Posterior vena cava (tissue), 2 donors: ENCODE measurements at regions of chr17 and their contacts with region 1.

Region 1: DNA sequence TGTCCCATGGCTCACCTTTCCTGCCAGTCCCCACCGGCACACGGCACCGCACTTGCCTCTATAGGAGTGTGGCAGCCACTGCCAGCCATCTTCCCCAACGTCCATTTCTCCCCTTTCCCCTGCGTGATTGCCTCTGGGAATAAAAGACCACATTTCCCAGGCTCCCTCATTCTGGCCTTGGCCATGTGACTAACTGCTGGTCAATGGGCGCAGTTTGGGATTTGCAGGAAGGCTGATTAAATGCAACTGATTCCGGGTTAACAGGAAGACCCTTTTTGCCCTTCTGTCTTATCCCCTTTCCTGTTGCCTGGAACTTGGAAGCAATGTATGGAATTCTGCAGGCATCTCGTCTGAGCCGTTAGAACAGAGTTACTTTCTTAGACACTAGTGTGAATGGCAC is 3.0 kb downstream of the BTBD17 start:
- DNase-seq: no peak

Region 2: GRCh38 chr17:72510397-72511016 is 1848.2 kb before region 1 on chr17:
- intact Hi-C with region 1: no loop called
- DNase-seq: no peak

Region 3: DNA sequence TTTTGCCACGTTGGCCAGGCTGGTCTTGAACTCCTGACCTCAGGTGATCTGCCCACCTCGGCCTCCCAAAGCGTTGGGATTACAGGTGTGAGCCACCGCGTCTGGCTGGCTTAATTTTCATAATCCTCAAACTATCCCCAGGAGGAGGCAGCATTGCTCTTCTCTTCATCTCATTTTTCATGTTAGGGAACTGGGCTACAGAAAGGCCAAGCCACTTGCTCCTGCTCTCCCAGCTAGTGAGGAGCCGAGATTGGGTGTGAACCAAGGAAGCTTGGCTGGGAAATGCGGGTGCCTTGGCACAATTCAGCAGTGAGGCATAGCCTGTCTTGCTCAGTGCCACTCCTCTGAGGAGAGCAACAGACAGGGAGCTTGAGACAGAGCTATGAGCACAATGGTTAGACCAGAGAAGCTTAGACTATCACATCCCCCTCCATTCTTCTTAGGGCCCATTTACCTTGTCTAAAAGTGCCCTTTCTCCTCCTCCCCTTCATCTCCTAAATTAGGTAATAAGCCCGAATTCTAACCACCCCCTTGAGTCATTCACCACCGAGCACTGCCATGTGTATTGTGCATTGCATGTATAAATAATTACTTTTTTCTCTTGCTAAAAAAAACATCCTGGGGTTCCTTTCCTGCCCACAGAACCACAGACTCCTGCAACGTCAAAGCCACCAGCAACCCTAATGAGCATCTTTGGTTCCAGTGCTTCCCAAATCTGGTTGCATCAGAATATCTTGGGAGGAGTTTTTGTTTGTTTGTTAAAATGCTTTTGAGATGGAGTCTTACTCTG is 52.6 kb before region 1 on chr17:
- intact Hi-C with region 1: no loop called
- DNase-seq: no peak

Region 4: DNA sequence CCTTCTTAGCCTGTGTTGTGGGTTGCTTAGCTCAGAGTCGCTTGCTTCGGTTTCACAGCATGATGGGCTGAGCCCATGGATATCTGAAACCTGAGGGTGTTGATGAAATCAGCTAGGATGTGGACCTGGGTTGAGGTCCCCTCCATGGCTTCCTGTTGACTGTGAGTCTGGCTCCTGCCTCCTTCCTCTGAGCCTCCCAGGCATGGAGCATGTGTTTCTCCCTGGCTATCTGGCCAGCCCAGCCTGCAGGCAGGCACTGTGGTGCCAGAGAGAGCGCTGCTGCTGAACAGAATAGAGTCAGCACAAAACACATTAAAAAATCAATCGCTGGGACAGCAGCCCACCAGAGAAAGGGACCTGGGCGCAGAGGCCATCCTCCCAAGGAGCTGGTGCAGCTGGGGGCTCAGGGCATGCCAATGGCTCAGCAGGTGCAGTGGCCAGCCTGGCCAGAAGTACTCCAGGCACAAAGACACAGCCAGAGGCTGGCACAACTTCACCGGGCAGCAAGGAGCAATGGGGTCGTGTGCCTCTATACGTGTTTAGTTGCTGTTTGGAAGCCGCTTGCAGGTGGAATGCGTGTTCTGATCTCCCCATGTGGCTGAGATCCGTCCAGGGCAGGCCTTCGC is 44.9 kb after region 1 on chr17:
- intact Hi-C with region 1: loop called in 1 of 2 experiments (anchors 2 kb)
- DNase-seq: no peak

Region 5: DNA sequence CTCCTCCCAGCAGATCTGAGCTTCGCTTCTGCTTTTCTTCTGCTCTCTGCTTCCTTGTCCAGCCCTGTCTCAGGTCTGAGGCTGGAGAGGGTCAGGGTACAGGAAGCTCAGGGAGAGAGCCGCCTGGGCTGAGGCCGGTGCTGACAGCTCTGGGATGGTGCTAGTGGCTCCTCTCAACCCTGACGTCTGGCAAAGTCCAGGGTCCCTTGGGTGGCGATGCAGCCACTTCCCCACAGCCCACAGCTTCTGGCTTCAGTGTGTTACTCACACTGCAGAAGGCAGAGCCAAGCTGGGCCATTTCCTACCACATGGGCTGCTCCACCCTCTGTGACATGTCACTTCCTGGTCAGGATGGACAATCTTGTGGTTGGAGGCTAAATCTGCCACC is 187.1 kb after region 1 on chr17 and contains the start of gene CD300C:
- intact Hi-C with region 1: no loop called
- DNase-seq: peak; percentile 88
- total RNA-seq, gene CD300C: 2.1 to 4.7 TPM